SK-N-SH (cell line): ENCODE measurements at regions of chr7 and their contacts with region 1.

Region 1: GRCh38 chr7:106176414-106177299 is 64.5 kb upstream of the SYPL1 start:
- DNase-seq: peak; percentile 88
- H3K4me3 ChIP-seq: no peak overlapping the region
- H3K27ac ChIP-seq: no peak overlapping the region
- H3K4me1 ChIP-seq: peaks cover 4 to 7% of the 10 kb centered on the region in 2 experiments; a peak in 2 of 4 replicates
- H3K27me3 ChIP-seq: no peaks in the 10 kb centered on the region
- CTCF ChIP-seq: peak; percentile 99
- EP300 ChIP-seq: no peak
- RAD21 ChIP-seq: peak; percentile 100

Region 2: DNA sequence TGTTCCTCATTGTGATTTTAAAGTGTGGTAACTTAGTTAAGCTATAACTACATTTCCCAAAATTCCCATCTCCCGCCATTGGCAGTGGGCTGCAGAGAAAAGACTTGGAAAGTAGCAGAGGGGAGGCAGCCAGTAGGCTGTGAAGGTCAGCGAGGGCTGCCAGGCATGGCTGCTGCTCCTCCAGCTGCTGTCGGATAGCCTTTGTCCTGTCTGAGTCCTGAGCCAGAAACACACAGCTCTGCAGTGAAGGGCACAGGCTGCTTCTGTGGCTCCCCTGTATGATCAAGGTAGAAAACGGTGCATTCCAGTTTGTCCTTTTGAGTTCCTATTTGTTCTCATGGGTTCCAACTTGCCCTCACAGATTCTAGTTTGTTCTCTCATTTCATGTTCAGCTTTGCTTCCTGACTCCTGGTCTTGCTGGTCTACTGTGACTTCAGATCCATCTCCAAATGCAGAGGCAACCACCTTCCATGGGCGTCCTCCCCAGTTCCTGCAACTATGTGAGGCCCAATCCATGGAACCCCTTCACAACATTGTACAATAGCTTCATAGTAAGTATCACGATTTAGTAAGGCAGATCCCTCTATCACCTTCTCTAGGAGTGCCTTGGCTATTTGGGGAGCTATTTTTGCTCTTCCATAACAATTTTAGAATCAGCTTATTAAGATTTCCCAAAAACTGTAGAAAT is 96.2 kb before region 1 on chr7:
- CTCF ChIA-PET with region 1: no interaction called
- POLR2A ChIA-PET with region 1: no interaction called
- DNase-seq: no peak
- H3K4me3 ChIP-seq: no peak overlapping the region
- H3K27ac ChIP-seq: no peak overlapping the region
- H3K4me1 ChIP-seq: no peaks in the 10 kb centered on the region; a peak in 1 of 4 replicates
- H3K27me3 ChIP-seq: no peaks in the 10 kb centered on the region
- CTCF ChIP-seq: no peak
- EP300 ChIP-seq: no peak
- RAD21 ChIP-seq: no peak

Region 3: DNA sequence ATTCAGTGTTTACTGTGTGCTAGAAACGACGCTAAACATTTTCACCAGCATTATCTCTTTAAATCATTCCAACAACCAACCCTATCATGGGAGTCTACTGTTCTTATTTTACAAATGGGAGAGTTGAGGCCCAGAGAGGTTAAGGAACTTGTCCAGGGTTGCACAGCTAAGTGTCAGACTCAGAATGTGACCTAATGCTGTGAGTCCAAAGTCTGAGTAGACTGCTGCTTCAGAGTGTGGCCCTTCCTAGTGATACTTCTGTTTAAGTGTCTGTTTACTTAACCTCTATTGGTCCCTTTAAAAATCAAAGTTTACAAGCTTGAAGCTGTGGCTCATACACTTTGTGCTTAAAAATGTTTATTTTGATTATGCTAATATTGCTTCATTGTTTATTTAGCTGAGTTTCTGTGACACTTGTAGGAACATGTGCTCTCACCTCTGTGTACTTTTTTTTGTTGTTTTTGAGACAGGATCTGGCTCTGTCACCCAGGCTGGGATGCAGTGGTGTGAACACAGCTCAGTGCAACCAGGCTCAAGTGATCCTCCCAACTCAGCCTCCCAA is 19.9 kb after region 1 on chr7:
- CTCF ChIA-PET with region 1: interaction called, 52 read pairs
- POLR2A ChIA-PET with region 1: no interaction called
- DNase-seq: no peak
- H3K4me3 ChIP-seq: no peak overlapping the region
- H3K27ac ChIP-seq: no peak overlapping the region
- H3K4me1 ChIP-seq: no peaks in the 10 kb centered on the region
- H3K27me3 ChIP-seq: no peaks in the 10 kb centered on the region
- CTCF ChIP-seq: no peak
- EP300 ChIP-seq: no peak
- RAD21 ChIP-seq: no peak

Region 4: GRCh38 chr7:106279425-106280197 is 103.0 kb after region 1 on chr7:
- CTCF ChIA-PET with region 1: interaction called, 21 read pairs
- POLR2A ChIA-PET with region 1: interaction called, 4 read pairs
- DNase-seq: no peak
- H3K4me3 ChIP-seq: no peak overlapping the region
- H3K27ac ChIP-seq: no peak overlapping the region
- H3K4me1 ChIP-seq: peaks cover 12 to 15% of the 10 kb centered on the region in 2 experiments; a peak in 3 of 4 replicates
- H3K27me3 ChIP-seq: no peaks in the 10 kb centered on the region
- CTCF ChIP-seq: no peak
- EP300 ChIP-seq: no peak
- RAD21 ChIP-seq: no peak

Region 5: GRCh38 chr7:106392144-106392543 is 215.5 kb after region 1 on chr7:
- CTCF ChIA-PET with region 1: interaction called, 16 read pairs
- POLR2A ChIA-PET with region 1: no interaction called
- DNase-seq: no peak
- H3K4me3 ChIP-seq: no peak overlapping the region
- H3K27ac ChIP-seq: no peak overlapping the region
- H3K4me1 ChIP-seq: no peaks in the 10 kb centered on the region
- H3K27me3 ChIP-seq: no peaks in the 10 kb centered on the region
- CTCF ChIP-seq: no peak
- EP300 ChIP-seq: no peak
- RAD21 ChIP-seq: no peak

Region 6: DNA sequence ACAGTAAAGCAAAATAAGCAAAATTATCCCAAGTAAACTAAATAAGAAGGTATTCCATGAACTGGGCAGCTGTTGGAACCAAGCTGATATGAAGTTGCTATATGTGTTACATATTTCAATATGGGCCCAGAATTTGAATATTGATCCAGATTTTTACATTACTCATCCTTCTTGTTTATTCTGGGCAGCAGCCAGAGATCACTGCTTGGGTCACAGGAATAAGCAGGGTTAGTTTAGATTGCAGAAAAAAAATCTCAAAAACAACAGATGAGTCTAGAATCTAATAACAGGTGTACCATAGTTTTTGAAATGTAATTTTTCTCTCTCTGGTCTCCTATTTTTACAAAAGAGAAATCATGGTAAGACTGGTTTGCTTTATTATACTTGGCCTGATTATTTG is 279.7 kb after region 1 on chr7:
- CTCF ChIA-PET with region 1: interaction called, 395 read pairs
- POLR2A ChIA-PET with region 1: no interaction called
- DNase-seq: no peak
- H3K4me3 ChIP-seq: no peak overlapping the region
- H3K27ac ChIP-seq: no peak overlapping the region
- H3K4me1 ChIP-seq: no peaks in the 10 kb centered on the region
- H3K27me3 ChIP-seq: no peaks in the 10 kb centered on the region
- CTCF ChIP-seq: no peak
- EP300 ChIP-seq: no peak
- RAD21 ChIP-seq: no peak

Region 7: GRCh38 chr7:106659963-106660861 is 483.6 kb after region 1 on chr7:
- CTCF ChIA-PET with region 1: interaction called, 45 read pairs
- POLR2A ChIA-PET with region 1: no interaction called
- DNase-seq: peak; percentile 94
- H3K4me3 ChIP-seq: peak overlapping the region; percentile 71 to 100
- H3K27ac ChIP-seq: peak overlapping the region; percentile 86 to 98
- H3K4me1 ChIP-seq: peaks cover 9 to 20% of the 10 kb centered on the region in 2 experiments; a peak in 3 of 4 replicates
- H3K27me3 ChIP-seq: no peaks in the 10 kb centered on the region
- CTCF ChIP-seq: peak; percentile 88
- EP300 ChIP-seq: peak in 1 of 2 experiments; percentile 5; a peak in 1 of 4 replicates
- RAD21 ChIP-seq: peak; percentile 63